ENCODE measurements at regions of chr14 and their contacts with region 1.

Region 1: DNA sequence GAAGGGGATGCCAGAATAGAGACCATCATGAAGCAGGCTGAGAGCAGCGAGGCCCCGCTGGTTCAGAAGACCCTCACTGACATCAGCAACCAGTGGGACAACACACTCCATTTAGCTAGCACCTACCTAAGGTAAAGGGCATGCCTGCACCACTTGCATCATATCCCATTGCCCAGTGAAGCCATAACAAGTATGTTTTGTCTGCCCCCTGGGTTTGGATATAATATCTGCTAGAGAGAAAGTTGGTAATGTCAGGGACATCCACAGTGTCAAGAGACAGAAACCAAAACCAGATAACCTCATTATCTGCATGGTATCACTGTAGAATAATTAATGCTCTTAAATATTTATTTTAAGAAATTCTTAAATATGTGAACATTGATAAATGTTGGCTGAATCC is 173.8 kb downstream of the SYNE2 start:
- DNase-seq: peak in 1 of 35 experiments; percentile 16
- ATAC-seq: no peak
- H3K4me3 ChIP-seq: no peak overlapping the region
- H3K4me3 Mint-ChIP-seq: no peak overlapping the region
- H3K27ac ChIP-seq: no peak overlapping the region
- H3K27ac Mint-ChIP-seq: no peak overlapping the region
- H3K4me1 ChIP-seq: no peaks in the 10 kb centered on the region
- H3K4me1 Mint-ChIP-seq: no peaks in the 10 kb centered on the region
- H3K27me3 ChIP-seq: no peaks in the 10 kb centered on the region
- H3K27me3 Mint-ChIP-seq: no peaks in the 10 kb centered on the region

Region 2: GRCh38 chr14:63993992-63994391 is 32.6 kb before region 1 on chr14:
- CTCF ChIA-PET with region 1: no interaction called
- POLR2A ChIA-PET with region 1: no interaction called
- DNase-seq: peak in 3 of 35 experiments; percentile 1 to 30 (median 3)
- ATAC-seq: no peak
- H3K4me3 ChIP-seq: no peak overlapping the region
- H3K4me3 Mint-ChIP-seq: no peak overlapping the region
- H3K27ac ChIP-seq: no peak overlapping the region
- H3K27ac Mint-ChIP-seq: no peak overlapping the region
- H3K4me1 ChIP-seq: peaks cover 0 to 2% of the 10 kb centered on the region in 2 experiments
- H3K4me1 Mint-ChIP-seq: peaks cover 0 to 7% (median 3%) of the 10 kb centered on the region in 3 donors
- H3K27me3 ChIP-seq: no peaks in the 10 kb centered on the region
- H3K27me3 Mint-ChIP-seq: no peaks in the 10 kb centered on the region

Region 3: GRCh38 chr14:64147126-64147790 is 120.7 kb after region 1 on chr14:
- CTCF ChIA-PET with region 1: interaction called in 1 of 2 experiments, 7 read pairs
- POLR2A ChIA-PET with region 1: interaction called in 1 of 2 experiments, 11 read pairs
- DNase-seq: no peak
- ATAC-seq: no peak
- H3K4me3 ChIP-seq: no peak overlapping the region
- H3K4me3 Mint-ChIP-seq: no peak overlapping the region
- H3K27ac ChIP-seq: no peak overlapping the region
- H3K27ac Mint-ChIP-seq: no peak overlapping the region
- H3K4me1 ChIP-seq: no peaks in the 10 kb centered on the region
- H3K4me1 Mint-ChIP-seq: no peaks in the 10 kb centered on the region
- H3K27me3 ChIP-seq: no peaks in the 10 kb centered on the region
- H3K27me3 Mint-ChIP-seq: no peaks in the 10 kb centered on the region

Measured in T-cell (primary cell).